Calu3 (cell line): ENCODE measurements at regions of chr7 and their contacts with region 1.

Region 1: DNA sequence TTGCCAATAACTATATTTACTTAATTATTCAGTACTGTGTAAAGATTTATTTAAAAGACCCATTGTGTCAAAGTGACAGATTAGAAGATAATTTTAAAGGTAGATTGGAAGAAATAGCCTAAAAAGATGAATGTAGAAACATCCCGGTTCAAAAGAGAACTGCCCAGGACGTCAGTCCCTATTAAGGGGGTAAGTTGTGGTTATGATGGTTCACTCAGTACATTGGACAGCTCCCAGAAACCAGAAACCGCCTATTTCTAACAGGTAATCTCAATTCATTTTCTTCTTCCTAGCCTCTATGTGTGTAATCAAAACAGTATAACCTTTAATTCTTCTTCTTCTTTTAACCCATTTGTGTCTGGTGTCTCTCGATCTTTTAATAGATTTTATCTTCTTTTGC is 1.5 kb upstream of the FERD3L start:
- DNase-seq: no peak
- H3K4me3 Mint-ChIP-seq: no peak overlapping the region
- H3K27ac Mint-ChIP-seq: no peak overlapping the region
- H3K4me1 Mint-ChIP-seq: no peaks in the 10 kb centered on the region
- H3K27me3 Mint-ChIP-seq: peaks cover 66% of the 10 kb centered on the region
- CTCF ChIP-seq: no peak

Region 2: GRCh38 chr7:18913106-18913505 is 233.6 kb before region 1 on chr7:
- CTCF ChIA-PET with region 1: interaction called, 10 read pairs
- intact Hi-C with region 1: no loop called
- DNase-seq: no peak
- H3K4me3 Mint-ChIP-seq: no peak overlapping the region
- H3K27ac Mint-ChIP-seq: no peak overlapping the region
- H3K4me1 Mint-ChIP-seq: no peaks in the 10 kb centered on the region
- H3K27me3 Mint-ChIP-seq: no peaks in the 10 kb centered on the region
- CTCF ChIP-seq: no peak

Region 3: DNA sequence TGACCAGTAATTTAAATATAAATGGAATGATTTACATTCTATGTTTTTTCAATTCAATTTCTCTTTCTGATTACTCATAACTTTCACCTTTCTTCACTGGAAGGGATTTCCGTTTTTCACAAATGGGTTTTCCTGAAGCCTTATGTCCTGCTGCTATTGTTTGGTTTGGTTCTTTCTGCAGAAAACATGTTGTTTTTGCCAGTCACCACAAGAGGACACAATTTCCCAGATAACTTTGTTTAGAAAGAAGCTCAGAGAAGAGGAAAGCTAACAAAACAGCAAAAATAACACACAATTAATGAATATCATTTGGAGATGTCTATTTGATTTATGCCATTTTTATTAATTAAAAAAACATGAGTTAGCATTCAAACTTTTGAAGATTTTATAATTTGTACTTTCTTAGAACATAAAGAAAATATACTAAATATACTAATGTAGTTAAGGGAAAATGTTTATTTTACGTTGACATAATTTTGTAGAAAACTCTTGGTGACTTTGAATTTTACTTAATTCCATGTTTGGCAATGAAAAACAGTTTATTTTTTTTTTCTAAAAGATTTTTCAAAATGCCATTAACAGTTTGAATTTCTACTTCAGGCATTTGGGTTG is 24.6 kb before region 1 on chr7:
- CTCF ChIA-PET with region 1: no interaction called
- intact Hi-C with region 1: no loop called
- DNase-seq: no peak
- H3K4me3 Mint-ChIP-seq: no peak overlapping the region
- H3K27ac Mint-ChIP-seq: no peak overlapping the region
- H3K4me1 Mint-ChIP-seq: no peaks in the 10 kb centered on the region
- H3K27me3 Mint-ChIP-seq: peaks cover 57% of the 10 kb centered on the region
- CTCF ChIP-seq: peak; percentile 60